Prostate gland (tissue), 2 donors: ENCODE measurements at regions of chr12 and their contacts with region 1.

Region 1: DNA sequence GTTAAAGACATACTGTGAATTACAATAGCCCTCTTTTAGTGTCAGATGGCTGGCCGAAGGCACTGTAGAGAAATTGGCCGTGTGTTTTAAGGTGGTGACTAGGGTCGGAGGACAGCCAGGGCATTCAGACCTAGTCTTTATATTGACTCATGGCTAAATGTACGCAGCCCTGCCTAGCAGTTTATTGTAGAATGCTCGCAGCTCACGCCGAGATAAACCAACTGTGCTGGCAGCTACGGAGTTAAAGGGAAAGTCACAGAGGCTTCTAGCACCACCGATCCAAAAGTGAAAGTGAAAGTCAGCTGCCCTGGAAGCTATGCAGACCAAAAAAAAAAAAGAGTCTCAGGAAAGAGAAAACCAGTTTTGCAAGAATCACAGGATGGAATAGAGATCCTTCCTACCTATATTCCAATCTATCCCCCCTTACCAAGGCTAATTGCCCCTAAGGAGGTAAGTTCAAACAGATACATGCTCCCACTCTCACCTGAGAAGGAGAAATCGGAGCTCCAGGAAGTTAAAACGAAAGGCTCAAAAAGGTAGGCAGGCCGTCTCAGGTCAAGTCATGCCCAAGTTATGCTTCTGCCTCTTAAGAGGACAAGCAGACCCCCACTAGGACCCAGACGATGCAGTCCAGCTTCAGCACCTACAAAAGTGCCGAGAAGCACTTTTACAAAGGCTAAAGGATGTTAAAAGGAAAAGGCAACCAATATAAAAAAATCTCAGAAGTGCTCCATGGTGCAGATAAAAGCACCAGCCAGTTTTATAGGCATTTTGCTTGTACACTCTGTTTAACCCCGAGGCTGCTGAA is 24.8 kb downstream of the KLRK1 start:
- DNase-seq: peak; percentile 72
- H3K4me3 ChIP-seq: peak overlapping the region; percentile 54 to 57
- H3K27ac ChIP-seq: peak overlapping the region; percentile 99 to 100
- H3K4me1 ChIP-seq: peaks cover 15% of the 10 kb centered on the region
- H3K27me3 ChIP-seq: no peaks in the 10 kb centered on the region
- CTCF ChIP-seq: no peak
- POLR2A ChIP-seq: no peak

Region 2: GRCh38 chr12:10212201-10213131 is 152.6 kb before region 1 on chr12 and contains the start of gene GABARAPL1:
- intact Hi-C with region 1: loop called (anchors 10 kb)
- DNase-seq: peak; percentile 98
- H3K4me3 ChIP-seq: peak within 1 kb of the TSS; percentile 59 to 71
- H3K27ac ChIP-seq: peak within 1 kb of the TSS; percentile 98
- H3K4me1 ChIP-seq: no peaks in the 10 kb centered on the region
- H3K27me3 ChIP-seq: no peaks in the 10 kb centered on the region
- CTCF ChIP-seq: peak in 2 of 4 experiments; percentile 19 to 31
- POLR2A ChIP-seq: peak; percentile 93
- total RNA-seq, gene GABARAPL1: 78.2 to 95.9 TPM

Region 3: DNA sequence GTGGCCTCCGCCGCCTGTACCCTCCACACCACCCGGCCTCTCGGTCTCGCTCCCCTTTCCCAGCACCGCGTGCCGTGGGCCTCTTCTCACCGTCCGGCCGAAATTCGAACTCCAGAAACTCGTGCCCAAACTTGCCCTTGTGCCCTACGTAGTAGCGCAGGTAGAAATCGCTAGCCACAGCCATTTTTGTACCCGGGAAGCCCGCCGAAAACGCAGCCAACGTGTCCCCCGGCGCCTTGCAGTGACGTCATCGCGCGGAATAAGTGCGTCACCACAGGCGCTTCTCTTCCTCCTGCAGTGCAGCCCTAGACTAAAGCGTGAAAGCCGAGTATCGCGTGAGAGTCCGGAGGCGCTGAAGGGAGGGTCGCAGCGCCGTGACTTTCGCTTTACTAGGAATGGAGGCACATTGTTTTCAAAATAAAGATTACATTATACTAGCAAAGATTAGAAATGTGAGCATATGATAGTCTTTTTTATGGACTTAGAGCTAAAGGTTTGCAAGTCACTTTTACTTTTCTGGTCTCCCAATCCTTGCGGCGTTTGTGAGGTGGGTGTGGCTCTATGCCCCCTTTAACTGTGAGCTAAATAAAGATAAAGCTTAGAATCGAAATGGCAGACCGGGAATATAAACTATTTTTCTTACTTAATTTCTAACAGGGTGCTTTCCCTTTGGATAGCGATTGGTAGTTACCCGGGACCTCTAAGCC is 248.5 kb after region 1 on chr12 and contains the start of gene MAGOHB:
- intact Hi-C with region 1: loop called (anchors 5 kb)
- DNase-seq: peak; percentile 91
- H3K4me3 ChIP-seq: peak within 1 kb of the TSS; percentile 47 to 71
- H3K27ac ChIP-seq: peak within 1 kb of the TSS; percentile 78 to 88
- H3K4me1 ChIP-seq: no peaks in the 10 kb centered on the region
- H3K27me3 ChIP-seq: no peaks in the 10 kb centered on the region
- CTCF ChIP-seq: peak in 2 of 4 experiments; percentile 32 to 36
- POLR2A ChIP-seq: peak; percentile 91
- total RNA-seq, gene MAGOHB: 24.2 to 24.8 TPM